Heart left ventricle (tissue), 16 donors: ENCODE measurements at regions of chr3 and their contacts with region 1.

Region 1: DNA sequence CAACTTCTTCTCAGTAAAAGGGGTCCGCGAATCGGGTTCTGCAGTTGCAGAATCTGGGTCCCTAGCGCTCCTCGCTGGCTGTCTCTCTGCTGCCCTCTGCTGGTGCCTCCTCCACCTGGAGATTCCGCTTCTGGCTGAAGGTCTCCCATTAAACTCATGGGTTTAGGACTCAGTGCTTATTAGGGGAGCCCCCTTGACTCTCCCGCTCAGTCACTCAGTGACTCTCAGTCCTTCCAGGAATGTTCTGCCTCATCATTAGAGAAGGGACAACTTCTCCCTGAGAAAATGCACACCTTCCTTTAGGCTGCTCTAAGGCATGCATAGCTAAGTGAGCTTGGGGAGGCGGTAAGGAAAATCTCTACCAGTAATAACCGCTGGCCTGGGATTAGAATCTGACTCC is 7.1 kb downstream of the CPN2 start:
- DNase-seq: peak; percentile 64 to 80 (median 75)
- ATAC-seq: peak in 3 of 4 donors; percentile 60 to 74 (median 73)
- H3K4me3 ChIP-seq: no peak overlapping the region
- H3K27ac ChIP-seq: no peak overlapping the region
- H3K4me1 ChIP-seq: no peaks in the 10 kb centered on the region
- H3K27me3 ChIP-seq: peaks cover 0 to 14% (median 0%) of the 10 kb centered on the region in 9 donors
- CTCF ChIP-seq: peak; percentile 38 to 98 (median 92)
- POLR2A ChIP-seq: no peak

Region 2: DNA sequence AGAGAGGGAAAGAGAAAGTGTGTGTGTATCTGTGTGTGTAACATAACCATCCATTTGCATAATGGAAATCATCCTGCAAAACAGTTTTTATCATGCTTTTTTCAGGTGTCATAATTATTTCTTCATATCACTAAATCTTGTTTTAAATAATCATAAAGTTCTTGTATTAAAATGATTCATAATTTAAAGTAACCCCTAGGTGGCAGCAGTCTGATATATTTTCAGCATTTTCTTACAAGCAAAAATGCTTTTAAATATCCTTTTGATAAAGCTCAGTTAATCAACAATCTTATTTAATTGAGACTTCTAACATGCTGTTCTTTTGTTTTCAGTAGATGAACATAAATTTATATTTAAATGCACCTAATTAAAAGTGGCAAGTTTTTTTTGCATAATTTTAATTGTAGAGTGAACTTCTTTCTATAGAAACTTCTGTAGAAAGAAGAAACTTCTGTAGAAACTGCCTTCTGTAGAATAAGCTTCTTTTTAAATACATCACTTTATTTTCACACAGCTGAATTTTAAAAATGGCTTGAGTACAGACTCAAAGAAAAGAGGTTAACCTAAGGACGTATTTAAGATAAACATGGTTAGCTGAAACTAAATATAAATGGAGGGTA is 678.5 kb before region 1 on chr3:
- intact Hi-C with region 1: loop called in 2 of 10 experiments (anchors 10 kb)
- DNase-seq: no peak
- ATAC-seq: no peak
- H3K4me3 ChIP-seq: no peak overlapping the region
- H3K27ac ChIP-seq: no peak overlapping the region
- H3K4me1 ChIP-seq: no peaks in the 10 kb centered on the region
- H3K27me3 ChIP-seq: no peaks in the 10 kb centered on the region
- CTCF ChIP-seq: peak; percentile 34 to 64 (median 51)
- POLR2A ChIP-seq: no peak

Region 3: DNA sequence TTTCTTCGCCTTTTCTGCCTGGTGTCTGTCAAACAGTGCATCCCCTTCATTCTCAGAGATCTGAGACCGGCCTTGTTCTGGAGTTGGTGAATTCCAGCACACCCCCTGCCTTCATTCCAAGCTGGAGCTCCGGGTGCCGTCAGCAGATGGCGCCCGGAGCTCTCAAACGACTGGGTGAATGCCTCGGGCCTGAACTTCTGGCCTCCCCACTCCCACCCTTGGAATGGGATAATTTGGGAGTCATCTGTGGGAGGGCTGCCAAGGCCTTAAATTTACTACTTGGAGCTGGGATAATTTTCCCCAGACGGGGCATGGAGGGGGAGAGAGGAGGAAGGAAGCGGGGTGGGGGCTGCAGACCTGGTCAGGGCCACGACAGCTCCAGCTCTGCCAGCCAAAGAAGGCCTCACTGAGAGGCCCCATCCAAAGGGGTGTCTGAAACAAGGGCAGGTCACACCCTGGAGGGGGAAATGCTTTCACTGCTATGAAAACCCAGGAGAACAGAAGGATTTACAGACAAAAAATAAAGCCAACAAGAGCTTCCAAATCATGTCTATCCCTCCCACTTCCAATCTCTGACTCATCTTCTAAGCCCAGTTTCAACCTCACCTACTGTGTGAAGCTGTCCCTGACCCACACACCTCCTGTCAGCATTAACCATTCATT is 563.1 kb before region 1 on chr3:
- intact Hi-C with region 1: loop called in 1 of 10 experiments (anchors 1 kb)
- DNase-seq: peak; percentile 66 to 84 (median 78)
- ATAC-seq: peak; percentile 78 to 94 (median 91)
- H3K4me3 ChIP-seq: no peak overlapping the region
- H3K27ac ChIP-seq: peak overlapping the region in 1 of 12 donors; percentile 44
- H3K4me1 ChIP-seq: peaks cover 0 to 16% (median 7%) of the 10 kb centered on the region in 12 donors
- H3K27me3 ChIP-seq: peaks cover 0 to 61% (median 29%) of the 10 kb centered on the region in 9 donors
- CTCF ChIP-seq: peak; percentile 57 to 87 (median 80)
- POLR2A ChIP-seq: no peak

Region 4: GRCh38 chr3:194395778-194396547 is 52.0 kb after region 1 on chr3:
- intact Hi-C with region 1: loop called in 2 of 10 experiments (anchors 5 kb)
- DNase-seq: peak in 2 of 5 donors; percentile 33 to 43
- ATAC-seq: peak; percentile 34 to 75 (median 49)
- H3K4me3 ChIP-seq: peak overlapping the region in 7 of 12 donors; percentile 14 to 48 (median 45)
- H3K27ac ChIP-seq: no peak overlapping the region
- H3K4me1 ChIP-seq: peaks cover 3 to 22% (median 11%) of the 10 kb centered on the region in 12 donors
- H3K27me3 ChIP-seq: peaks cover 6 to 40% (median 17%) of the 10 kb centered on the region in 9 donors
- CTCF ChIP-seq: no peak
- POLR2A ChIP-seq: no peak

Region 5: DNA sequence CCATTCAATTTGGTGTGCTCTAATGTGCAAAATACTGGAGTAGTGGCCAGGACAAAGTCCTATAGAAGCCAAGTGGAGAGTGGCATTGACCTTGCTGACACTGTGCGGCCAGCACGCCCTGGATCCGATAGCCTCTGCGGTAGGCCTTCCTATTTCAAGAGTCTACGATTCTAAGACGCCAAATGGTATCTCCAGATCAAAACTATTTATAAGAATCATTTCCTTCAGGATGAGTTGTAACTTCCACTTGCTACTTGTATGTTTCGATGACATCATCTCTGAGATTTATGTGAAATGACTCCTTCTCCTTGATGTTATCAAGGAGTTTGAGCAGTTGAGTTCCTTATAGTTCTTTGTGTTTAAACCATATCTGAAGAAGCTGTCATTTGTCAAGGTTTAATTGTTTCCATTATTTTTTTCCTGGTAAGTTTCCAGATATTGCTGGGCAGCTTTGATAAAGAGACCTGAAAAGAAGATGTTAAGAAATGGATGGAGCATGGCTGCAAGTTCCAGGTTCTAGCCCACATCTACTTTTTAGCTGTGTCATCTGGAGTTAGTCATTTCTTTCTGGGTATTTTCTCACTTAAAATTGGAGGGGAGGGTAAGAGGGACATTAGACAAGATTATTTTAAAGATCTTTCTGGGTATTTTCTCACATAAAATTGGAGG is 217.4 kb after region 1 on chr3:
- intact Hi-C with region 1: no loop called
- DNase-seq: no peak
- ATAC-seq: peak in 2 of 4 donors; percentile 34 to 53
- H3K4me3 ChIP-seq: no peak overlapping the region
- H3K27ac ChIP-seq: peak overlapping the region in 2 of 12 donors; percentile 43 to 48
- H3K4me1 ChIP-seq: peaks cover 0 to 19% (median 0%) of the 10 kb centered on the region in 12 donors
- H3K27me3 ChIP-seq: peaks cover 0 to 1% (median 0%) of the 10 kb centered on the region in 9 donors
- CTCF ChIP-seq: no peak
- POLR2A ChIP-seq: no peak